Right ventricle myocardium inferior (tissue), 1 donor: ENCODE measurements at regions of chr6 and their contacts with region 1.

Region 1: GRCh38 chr6:4610256-4610655 is 165.9 kb upstream of the CDYL start:
- DNase-seq: no peak
- ATAC-seq: peak; percentile 73

Region 2: DNA sequence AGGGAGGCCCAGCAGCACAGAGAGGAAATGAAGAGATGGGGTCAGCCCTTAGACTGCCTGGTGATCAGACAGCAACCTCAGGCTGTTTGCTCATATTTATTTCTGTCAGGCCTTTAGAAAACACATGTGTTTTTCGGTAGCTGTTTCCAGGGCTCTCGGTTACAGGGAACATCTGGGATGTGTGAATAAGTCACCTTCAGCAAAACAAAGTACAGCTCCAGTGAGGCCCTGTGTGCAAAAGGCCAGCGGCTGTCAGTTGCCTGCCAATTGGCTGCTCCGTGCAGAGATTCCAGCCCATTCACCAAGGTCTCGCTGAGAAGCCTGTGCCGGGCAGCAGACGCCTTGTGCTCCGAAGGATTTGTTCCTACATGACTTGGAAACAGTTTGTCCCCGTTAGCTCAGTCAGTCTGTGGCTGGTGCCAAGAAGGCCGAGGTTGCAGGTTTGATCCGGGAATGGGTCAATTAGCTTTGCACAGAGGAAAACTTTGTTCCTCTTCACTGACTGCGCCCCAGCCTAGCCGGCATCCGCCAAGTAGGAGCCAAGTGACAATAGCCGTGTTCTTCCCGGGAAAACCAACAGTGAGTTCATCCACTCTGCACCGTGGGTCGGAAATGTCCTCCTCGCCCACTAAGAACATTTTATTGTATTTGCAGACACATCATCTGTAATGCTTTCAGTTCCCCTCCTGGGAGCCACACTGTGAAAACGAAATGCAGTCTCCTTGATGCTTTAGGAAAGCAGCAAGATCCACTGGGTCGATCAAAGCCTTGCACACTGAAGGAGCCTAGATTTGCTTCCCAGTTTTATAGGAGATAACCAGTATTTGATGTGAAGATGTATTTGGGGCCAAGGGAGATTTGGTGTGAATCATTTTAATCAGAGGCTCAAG is 149.4 kb before region 1 on chr6:
- intact Hi-C with region 1: loop called (anchors 10 kb)
- DNase-seq: peak; percentile 89
- ATAC-seq: peak; percentile 94

Region 3: DNA sequence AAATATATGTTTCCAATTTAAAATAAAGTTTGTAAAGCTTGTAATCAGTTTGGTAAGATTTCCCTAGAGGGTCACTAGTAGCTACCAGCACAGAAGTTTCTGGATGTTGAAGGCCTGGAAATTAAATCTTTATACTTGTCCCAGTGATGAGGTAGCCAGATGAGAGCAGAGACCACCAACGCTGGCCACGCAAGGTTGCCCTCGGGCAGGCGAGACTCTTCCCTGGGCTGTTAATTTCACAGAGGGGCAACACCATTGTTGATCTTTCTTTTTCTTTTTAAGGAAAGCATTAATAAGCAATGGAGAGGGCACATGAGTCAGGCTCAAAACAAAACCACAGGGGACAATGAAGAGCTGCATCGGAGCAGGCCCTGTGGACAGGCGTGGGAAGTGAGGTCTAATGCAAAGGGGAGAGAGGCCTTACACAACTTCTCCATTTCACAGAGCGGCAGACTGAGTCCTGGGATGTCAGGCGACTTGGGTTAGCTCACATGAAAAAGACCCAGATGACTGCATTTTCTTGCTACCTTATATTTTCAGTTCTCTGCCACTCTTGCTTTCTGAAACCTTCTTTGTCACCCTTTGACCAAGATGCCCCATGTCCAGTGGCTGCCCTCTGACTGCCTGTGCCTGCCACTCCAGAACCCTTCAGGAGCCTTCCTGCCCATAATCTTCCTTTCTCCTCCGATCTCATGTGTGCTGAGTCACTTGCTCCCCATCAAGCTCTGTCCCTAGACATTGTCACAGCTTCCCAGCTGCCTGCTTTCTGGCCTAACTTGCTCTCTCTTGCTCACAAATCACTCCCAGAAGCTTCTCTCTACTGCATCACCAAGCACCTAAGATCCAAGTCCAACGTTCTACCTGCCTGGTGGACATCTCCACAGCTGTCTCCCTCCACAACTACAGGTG is 58.3 kb after region 1 on chr6:
- intact Hi-C with region 1: no loop called
- DNase-seq: no peak
- ATAC-seq: no peak